Activated naive CD4-positive, alpha-beta T cell treated with anti-CD3 and anti-CD28 coated beads for 36 hours (primary cell): ENCODE measurements at regions of chr2 and their contacts with region 1.

Region 1: GRCh38 chr2:218069606-218070300 is 700 bp downstream of the RUFY4 start:
- DNase-seq: no peak
- H3K4me3 Mint-ChIP-seq: no peak overlapping the region
- H3K27ac Mint-ChIP-seq: no peak overlapping the region
- H3K4me1 Mint-ChIP-seq: peaks cover 6% of the 10 kb centered on the region
- H3K27me3 Mint-ChIP-seq: peaks cover 6% of the 10 kb centered on the region

Region 2: DNA sequence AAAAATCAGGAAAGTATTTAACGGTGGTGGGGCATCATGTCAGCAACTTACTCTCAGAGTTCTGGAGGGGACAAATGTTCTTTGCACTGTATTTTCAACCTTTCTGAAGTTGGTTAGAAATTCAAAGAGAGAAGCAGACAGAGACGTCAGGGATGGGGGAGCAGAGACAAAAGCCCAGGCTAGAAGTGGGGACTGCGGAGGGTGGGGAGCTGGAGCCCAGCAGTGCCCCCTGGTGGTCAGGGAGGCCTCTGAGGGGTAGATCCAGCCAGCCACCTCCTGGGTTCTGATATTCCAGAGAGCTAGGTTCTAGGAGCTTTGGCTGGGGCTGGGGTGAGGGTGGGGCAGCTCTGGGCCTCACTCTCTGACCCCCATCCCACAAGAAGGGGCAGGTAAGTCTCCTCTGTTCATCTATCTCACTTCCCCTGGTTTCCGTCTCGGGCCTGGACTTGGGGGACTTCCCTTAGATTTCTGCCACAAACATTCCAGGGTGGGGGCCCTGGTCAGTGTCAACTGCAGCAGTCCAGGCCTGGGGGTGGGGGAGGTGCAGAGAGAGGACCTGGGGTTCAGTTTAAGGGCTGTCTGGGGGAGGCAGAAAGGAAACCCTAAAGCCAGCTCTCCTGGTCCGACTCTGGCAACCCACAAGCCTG is 75.8 kb before region 1 on chr2:
- CTCF ChIA-PET with region 1: interaction called, 4 read pairs
- intact Hi-C with region 1: loop called (anchors 2 kb)
- DNase-seq: peak; percentile 65
- H3K4me3 Mint-ChIP-seq: no peak overlapping the region
- H3K27ac Mint-ChIP-seq: no peak overlapping the region
- H3K4me1 Mint-ChIP-seq: no peaks in the 10 kb centered on the region
- H3K27me3 Mint-ChIP-seq: no peaks in the 10 kb centered on the region

Region 3: DNA sequence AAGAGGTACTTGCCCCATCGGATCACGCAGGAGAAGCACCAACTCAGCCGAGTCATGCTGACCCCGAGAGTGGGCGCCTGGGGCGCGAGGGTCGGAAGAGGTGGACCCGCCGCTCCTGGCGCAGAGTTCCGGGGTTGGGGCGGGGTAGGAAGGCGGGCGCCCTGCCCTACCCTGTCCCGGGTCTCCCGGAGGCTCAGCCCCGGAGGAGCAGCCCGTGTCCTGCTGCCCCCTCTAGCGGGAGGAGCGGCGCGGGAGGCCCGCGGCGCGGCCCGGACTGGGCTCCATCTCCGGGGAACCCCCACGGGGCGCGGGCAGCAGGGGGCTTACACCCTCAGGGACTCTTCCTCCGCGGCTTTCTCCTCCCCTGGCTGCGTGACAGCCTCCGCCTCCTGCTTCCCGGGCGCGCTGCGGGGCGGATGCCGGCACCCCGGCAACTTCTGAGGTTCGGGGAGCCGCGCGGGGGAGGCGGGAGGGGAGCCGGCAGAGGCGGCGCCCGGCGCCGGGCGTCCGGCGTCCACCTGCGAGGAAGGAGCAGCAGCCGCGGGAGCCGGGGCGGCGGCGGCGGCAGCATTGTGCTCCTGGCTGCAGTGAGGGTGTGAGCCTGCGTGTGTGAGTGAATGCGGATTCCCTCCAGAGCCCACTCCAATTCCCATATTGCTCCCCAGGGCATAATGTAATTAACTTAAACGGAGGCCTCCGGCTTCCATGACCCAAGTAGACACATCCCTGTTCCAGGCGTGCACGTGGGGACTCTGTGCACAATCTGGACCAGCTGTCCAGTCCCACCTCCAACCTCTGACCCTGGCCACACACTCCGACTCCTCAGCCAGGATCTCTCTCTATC is 59.4 kb before region 1 on chr2:
- CTCF ChIA-PET with region 1: interaction called, 3 read pairs
- intact Hi-C with region 1: loop called (anchors 2 kb)
- DNase-seq: peak; percentile 43
- H3K4me3 Mint-ChIP-seq: peak overlapping the region; percentile 58
- H3K27ac Mint-ChIP-seq: no peak overlapping the region
- H3K4me1 Mint-ChIP-seq: peaks cover 8% of the 10 kb centered on the region
- H3K27me3 Mint-ChIP-seq: peaks cover 27% of the 10 kb centered on the region

Region 4: DNA sequence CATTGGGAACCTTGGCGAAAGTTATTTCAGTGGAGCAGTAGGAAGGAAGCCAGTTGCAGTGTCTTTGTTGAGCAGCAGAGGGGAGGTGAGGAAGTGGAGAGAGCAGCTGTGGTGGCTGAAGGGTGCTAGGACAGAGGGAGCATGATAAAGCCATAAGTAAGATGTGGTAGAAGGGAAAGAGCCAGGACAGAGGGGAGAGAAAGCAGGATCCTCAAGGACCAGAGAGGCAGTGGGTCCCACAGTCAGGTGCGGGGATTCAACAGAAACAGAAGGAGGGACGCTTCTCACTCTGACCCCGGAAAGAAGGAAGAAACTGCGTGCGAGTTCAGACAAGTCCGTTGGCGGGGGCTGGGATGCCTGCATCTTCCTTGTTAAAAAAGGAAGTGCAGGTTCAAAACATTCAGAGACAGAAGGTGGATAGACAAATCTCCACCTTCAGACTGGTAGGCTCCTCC is 55.9 kb after region 1 on chr2 and contains the start of gene CXCR2:
- CTCF ChIA-PET with region 1: no interaction called
- intact Hi-C with region 1: no loop called
- DNase-seq: no peak
- H3K4me3 Mint-ChIP-seq: no peak within 1 kb of the TSS
- H3K27ac Mint-ChIP-seq: no peak within 1 kb of the TSS
- H3K4me1 Mint-ChIP-seq: peaks cover 8% of the 10 kb centered on the region
- H3K27me3 Mint-ChIP-seq: peaks cover 6% of the 10 kb centered on the region
- total RNA-seq, gene CXCR2: 0.17 to 0.21 TPM

Region 5: GRCh38 chr2:218145125-218145524 is 75.4 kb after region 1 on chr2:
- CTCF ChIA-PET with region 1: no interaction called
- intact Hi-C with region 1: no loop called
- DNase-seq: no peak
- H3K4me3 Mint-ChIP-seq: no peak overlapping the region
- H3K27ac Mint-ChIP-seq: no peak overlapping the region
- H3K4me1 Mint-ChIP-seq: no peaks in the 10 kb centered on the region
- H3K27me3 Mint-ChIP-seq: peaks cover 2% of the 10 kb centered on the region